Natural killer cell (primary cell): ENCODE measurements at regions of chr6 and their contacts with region 1.

Region 1: DNA sequence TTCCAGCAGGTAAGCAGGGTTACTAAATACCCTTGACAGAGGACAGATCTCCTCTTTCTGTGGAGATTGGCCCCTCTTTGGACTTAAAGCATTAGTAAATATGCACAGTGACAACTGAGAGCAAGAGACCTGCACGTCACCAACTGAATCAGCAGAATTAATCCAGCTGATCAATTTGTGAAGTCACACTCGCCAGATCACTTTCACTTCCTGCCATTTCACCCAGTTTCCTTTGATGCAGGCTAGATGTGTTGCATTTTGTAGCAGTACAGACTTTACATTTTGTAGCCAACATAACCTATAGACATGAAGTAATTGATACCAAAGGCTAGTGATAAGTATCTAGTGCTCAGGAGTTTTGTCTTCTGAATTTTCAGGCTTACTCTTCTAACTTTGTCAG is 11.9 kb downstream of the SYNE1 start:
- DNase-seq: peak in 1 of 2 donors; percentile 47
- ATAC-seq: peak; percentile 58 to 79 (median 79)
- H3K4me3 ChIP-seq: no peak overlapping the region
- H3K4me3 Mint-ChIP-seq: peak overlapping the region; percentile 72
- H3K27ac ChIP-seq: no peak overlapping the region
- H3K27ac Mint-ChIP-seq: peak overlapping the region; percentile 54 to 79
- H3K4me1 ChIP-seq: no peaks in the 10 kb centered on the region
- H3K4me1 Mint-ChIP-seq: peaks cover 49 to 50% of the 10 kb centered on the region in 2 donors
- H3K27me3 ChIP-seq: no peaks in the 10 kb centered on the region
- H3K27me3 Mint-ChIP-seq: no peaks in the 10 kb centered on the region
- CTCF ChIP-seq: no peak

Region 2: GRCh38 chr6:152380993-152381898 is 244.0 kb before region 1 on chr6:
- intact Hi-C with region 1: no loop called
- DNase-seq: no peak
- ATAC-seq: no peak
- H3K4me3 ChIP-seq: no peak overlapping the region
- H3K4me3 Mint-ChIP-seq: no peak overlapping the region
- H3K27ac ChIP-seq: no peak overlapping the region
- H3K27ac Mint-ChIP-seq: peak overlapping the region; percentile 79 to 82
- H3K4me1 ChIP-seq: no peaks in the 10 kb centered on the region
- H3K4me1 Mint-ChIP-seq: peaks cover 34 to 42% of the 10 kb centered on the region in 2 donors
- H3K27me3 ChIP-seq: no peaks in the 10 kb centered on the region
- H3K27me3 Mint-ChIP-seq: no peaks in the 10 kb centered on the region
- CTCF ChIP-seq: no peak

Region 3: GRCh38 chr6:152416652-152417051 is 208.6 kb before region 1 on chr6:
- intact Hi-C with region 1: no loop called
- DNase-seq: no peak
- ATAC-seq: no peak
- H3K4me3 ChIP-seq: no peak overlapping the region
- H3K4me3 Mint-ChIP-seq: no peak overlapping the region
- H3K27ac ChIP-seq: no peak overlapping the region
- H3K27ac Mint-ChIP-seq: peak overlapping the region in 1 of 2 donors; percentile 18
- H3K4me1 ChIP-seq: no peaks in the 10 kb centered on the region
- H3K4me1 Mint-ChIP-seq: peaks cover 15 to 17% of the 10 kb centered on the region in 2 donors
- H3K27me3 ChIP-seq: no peaks in the 10 kb centered on the region
- H3K27me3 Mint-ChIP-seq: no peaks in the 10 kb centered on the region
- CTCF ChIP-seq: no peak

Region 4: DNA sequence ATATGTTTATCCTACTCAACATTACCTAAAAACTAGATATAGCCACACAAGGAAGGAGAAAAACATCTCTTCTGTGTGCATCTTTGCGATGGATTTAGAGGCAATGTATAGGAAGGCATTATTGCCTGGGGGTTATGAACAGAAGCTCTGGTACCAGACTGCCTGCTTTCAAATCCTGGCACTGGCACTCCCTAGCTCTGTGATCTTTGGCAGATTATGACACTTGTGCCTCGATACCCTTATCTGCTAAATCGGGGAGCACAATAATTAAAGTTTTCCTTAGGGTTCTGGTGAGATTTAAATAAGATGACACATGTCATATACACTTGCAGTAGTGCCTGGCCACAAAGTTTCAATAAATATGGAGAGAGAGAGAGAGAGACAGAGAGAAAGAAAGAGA is 41.3 kb before region 1 on chr6:
- intact Hi-C with region 1: loop called (anchors 5 kb)
- DNase-seq: no peak
- ATAC-seq: no peak
- H3K4me3 ChIP-seq: no peak overlapping the region
- H3K4me3 Mint-ChIP-seq: no peak overlapping the region
- H3K27ac ChIP-seq: no peak overlapping the region
- H3K27ac Mint-ChIP-seq: peak overlapping the region in 1 of 2 donors; percentile 40
- H3K4me1 ChIP-seq: no peaks in the 10 kb centered on the region
- H3K4me1 Mint-ChIP-seq: peaks cover 63 to 64% of the 10 kb centered on the region in 2 donors
- H3K27me3 ChIP-seq: no peaks in the 10 kb centered on the region
- H3K27me3 Mint-ChIP-seq: no peaks in the 10 kb centered on the region
- CTCF ChIP-seq: no peak